IMR-90 (cell line): ENCODE measurements at regions of chr9 and their contacts with region 1.

Region 1: DNA sequence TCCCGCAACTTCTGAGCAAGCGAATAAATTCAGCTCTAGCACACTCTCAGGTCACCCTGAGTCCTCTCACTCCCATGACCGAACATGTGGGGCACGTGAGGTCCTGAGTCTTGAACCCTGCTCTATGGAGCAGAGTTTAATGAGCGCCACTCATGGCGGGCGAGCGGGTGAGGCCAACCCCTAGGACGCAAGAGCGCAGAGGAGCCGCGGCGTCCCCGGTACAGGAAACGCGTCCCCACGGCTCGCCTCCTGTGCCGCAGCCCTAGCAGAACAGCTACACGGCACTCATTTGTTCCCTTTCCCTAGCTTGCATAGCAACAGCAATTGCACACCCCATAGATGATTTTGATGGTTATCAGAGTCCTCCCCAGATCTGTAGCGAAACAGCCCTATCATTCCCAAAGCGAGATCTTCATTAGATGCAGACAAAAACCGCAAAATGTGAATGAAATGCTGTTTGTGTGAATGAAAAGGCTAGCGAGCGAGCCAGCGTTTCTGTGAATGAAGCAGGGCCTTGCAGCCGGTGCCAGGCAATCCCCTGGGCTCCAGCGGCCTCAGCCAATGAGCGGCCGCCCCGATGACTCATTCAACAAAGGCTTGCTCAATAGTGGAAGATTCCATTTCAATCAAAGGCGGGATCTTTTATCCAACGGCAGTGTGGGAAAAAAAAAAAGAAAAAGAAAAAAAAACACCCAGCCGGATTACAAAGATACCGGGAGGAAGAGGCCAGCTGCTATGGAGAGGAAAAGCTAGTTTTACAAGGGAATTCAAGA is 1.5 kb upstream of the SHC3 start:
- DNase-seq: peak; percentile 97
- ATAC-seq: peak; percentile 66
- H3K4me3 ChIP-seq: peak overlapping the region; percentile 50
- H3K27ac ChIP-seq: peak overlapping the region; percentile 91
- H3K4me1 ChIP-seq: peaks cover 11% of the 10 kb centered on the region
- H3K27me3 ChIP-seq: no peaks in the 10 kb centered on the region
- CTCF ChIP-seq: no peak
- POLR2A ChIP-seq: peak; percentile 76
- RAD21 ChIP-seq: peak; percentile 3; the same call in 1 of the 2 replicates

Region 2: DNA sequence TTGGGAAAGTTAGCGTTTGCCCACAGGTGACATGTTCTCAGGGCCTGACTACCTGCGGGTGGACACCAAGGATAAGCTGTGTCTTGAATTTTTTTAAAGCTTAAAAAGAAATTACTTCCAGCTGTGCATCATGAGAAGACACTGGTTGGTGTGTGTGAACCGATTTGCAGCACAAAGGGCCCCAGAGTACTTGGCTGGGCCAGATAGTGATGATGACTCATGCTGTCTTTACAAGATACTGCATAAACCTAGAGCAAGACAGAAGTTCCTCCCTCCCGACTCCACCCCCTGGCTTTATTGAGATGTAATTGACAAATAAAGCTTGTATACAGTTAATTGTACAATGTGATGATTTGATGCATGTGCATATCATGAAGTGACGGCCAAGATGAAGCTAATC is 432.3 kb before region 1 on chr9:
- CTCF ChIA-PET with region 1: no interaction called
- POLR2A ChIA-PET with region 1: no interaction called
- dilution Hi-C with region 1: no loop called
- in situ Hi-C with region 1: no loop called
- intact Hi-C with region 1: loop called (anchors 10 kb)
- DNase-seq: peak; percentile 96
- ATAC-seq: peak; percentile 50
- H3K4me3 ChIP-seq: no peak overlapping the region
- H3K27ac ChIP-seq: peak overlapping the region; percentile 93
- H3K4me1 ChIP-seq: peaks cover 35% of the 10 kb centered on the region
- H3K27me3 ChIP-seq: no peaks in the 10 kb centered on the region
- CTCF ChIP-seq: no peak
- POLR2A ChIP-seq: no peak
- RAD21 ChIP-seq: peak; percentile 10; the same call in 1 of the 2 replicates

Region 3: DNA sequence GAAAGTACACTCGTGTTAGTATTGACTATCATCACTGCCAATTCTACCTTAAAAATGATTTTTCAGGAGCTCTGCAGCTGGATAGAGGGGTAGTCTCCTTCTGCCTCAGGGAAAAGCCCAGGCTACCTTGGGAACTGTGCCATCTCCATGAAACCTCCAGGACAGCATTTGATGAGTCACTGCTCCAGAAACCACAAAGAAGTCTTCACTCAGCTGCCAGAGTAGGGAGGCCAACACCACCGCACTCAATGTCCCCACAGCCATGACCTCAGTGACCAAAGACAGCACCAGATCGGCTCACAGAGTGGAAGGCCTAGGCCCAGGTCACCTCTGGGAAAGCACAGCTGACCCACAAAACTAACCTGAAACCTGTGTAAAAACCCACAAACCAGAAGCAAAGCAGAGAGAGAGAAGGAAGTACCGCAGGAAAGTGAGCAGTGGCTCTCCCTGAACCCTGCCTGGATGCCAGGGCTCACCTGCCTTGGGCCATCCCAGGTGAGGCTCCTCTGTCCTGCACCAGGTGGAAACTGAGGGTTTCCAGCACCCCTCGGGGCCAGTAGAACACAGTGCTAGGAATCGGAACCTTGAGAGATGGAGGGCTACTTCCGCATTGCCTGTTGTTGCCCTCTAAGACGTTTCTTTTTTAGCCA is 158.8 kb before region 1 on chr9:
- CTCF ChIA-PET with region 1: no interaction called
- POLR2A ChIA-PET with region 1: no interaction called
- dilution Hi-C with region 1: no loop called
- in situ Hi-C with region 1: no loop called
- intact Hi-C with region 1: loop called (anchors 5 kb)
- DNase-seq: peak; percentile 94
- ATAC-seq: peak; percentile 75
- H3K4me3 ChIP-seq: no peak overlapping the region
- H3K27ac ChIP-seq: peak overlapping the region; percentile 5; the same call in 1 of the 2 replicates
- H3K4me1 ChIP-seq: peaks cover 28% of the 10 kb centered on the region
- H3K27me3 ChIP-seq: no peaks in the 10 kb centered on the region
- CTCF ChIP-seq: no peak
- POLR2A ChIP-seq: no peak
- RAD21 ChIP-seq: no peak

Region 4: DNA sequence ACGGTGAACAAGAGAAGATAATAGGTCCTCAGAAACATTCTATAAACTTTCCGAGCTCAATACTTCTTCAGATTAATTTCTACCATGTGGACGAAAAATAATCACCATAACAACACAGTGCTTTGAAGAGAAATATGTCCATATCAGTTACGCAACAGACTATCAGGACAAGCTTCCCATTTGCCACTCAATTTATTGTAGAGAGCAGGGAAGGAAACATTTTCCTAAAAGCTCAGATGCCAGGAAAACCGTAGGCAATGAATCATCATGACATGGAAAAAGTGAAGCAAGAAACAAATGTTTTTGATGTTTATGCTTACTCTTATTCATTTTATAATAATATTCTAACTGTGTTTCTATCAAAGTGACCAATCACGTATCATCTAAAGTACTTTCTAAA is 101.2 kb before region 1 on chr9:
- CTCF ChIA-PET with region 1: no interaction called
- POLR2A ChIA-PET with region 1: no interaction called
- dilution Hi-C with region 1: no loop called
- in situ Hi-C with region 1: no loop called
- intact Hi-C with region 1: loop called (anchors 1 kb)
- DNase-seq: peak; percentile 57
- ATAC-seq: peak; percentile 15
- H3K4me3 ChIP-seq: no peak overlapping the region
- H3K27ac ChIP-seq: no peak overlapping the region; the same call in 1 of the 2 replicates
- H3K4me1 ChIP-seq: peaks cover 12% of the 10 kb centered on the region
- H3K27me3 ChIP-seq: no peaks in the 10 kb centered on the region
- CTCF ChIP-seq: no peak
- POLR2A ChIP-seq: no peak
- RAD21 ChIP-seq: no peak

Region 5: DNA sequence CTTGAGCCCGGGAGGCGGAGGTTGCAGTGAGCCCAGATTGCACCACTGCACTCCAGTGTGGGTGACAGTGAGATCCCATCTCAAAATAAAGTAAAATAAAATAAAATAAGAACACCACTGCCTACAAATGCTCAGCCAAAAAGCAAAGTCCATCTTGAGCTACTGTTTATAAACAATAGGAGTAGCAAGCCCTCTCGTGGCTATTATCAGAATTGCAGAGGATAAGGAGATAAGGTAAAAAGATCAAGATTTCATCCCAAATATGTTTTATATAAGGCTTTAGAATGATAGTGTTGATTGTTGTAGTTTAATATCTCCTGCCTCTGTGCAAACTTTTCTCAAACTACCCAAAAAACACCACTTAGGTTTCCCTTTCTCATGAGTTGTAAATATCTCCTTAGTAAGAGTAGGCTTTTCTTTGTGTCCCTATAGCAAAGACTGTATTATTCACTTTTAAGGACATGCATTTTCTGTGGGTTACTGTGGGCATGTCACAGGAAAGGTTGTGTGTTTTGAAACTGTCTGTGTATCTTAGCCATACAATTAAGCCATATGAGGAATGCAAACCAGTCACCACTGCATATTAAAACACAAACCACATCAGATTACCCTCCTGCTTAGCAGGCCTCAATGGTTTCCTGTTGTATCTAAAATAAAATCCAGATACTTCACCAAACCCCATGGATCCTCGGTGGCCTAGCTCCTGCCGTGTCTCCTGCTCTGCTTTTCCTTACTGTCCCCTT is 99.1 kb after region 1 on chr9:
- CTCF ChIA-PET with region 1: interaction called, 3 read pairs
- POLR2A ChIA-PET with region 1: no interaction called
- dilution Hi-C with region 1: no loop called
- in situ Hi-C with region 1: no loop called
- intact Hi-C with region 1: loop called (anchors 2 kb)
- DNase-seq: peak; percentile 71
- ATAC-seq: peak; percentile 39; the same call in 1 of the 2 replicates
- H3K4me3 ChIP-seq: no peak overlapping the region
- H3K27ac ChIP-seq: no peak overlapping the region
- H3K4me1 ChIP-seq: peaks cover 7% of the 10 kb centered on the region; the same call in 1 of the 2 replicates
- H3K27me3 ChIP-seq: no peaks in the 10 kb centered on the region
- CTCF ChIP-seq: peak; percentile 75
- POLR2A ChIP-seq: no peak
- RAD21 ChIP-seq: peak; percentile 72

Region 6: DNA sequence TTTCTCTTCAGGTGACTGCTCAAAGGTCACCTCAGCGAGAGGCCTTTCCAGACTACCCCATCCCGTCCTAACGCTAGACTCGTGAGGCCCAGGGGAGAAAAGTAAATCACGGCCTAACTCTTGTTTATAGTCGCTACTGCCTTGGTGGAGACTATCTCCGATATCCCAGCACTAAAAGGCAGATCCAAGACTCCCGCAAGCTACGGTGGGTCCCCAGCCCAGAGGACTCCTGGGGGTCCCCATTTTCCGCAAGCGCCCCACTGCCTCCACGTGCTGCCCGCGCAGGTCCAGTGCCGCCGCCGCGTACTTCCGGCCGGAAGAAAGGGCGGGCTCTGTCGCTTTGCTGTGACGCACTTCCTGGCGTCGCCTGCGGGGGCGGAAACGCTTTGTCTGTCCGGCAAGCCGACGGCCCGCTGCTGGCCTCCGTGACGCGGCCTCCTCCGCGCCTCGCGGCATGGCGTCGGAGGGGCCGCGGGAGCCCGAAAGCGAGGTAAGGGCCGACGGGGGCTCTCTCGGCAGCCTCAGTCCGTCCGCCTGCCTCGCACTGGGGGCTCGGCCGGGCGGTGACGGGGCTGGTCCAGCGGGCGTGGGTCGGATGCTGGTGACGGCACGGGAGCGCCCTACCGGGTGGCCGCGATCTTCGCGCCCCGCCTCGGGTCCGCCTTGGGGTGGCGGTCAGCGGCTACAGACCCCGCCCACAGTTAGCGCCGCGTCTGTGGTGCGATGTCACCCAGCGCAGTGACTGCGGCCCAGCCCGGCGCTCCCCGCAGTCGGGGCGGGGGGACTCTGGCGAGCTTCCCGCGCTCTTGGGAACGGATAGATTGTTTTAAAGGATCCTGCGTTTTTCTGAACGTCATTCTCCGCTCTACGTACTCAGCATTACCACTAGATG is 138.3 kb after region 1 on chr9 and contains the start of gene SECISBP2:
- CTCF ChIA-PET with region 1: no interaction called
- POLR2A ChIA-PET with region 1: interaction called, 3 read pairs
- dilution Hi-C with region 1: no loop called
- in situ Hi-C with region 1: no loop called
- intact Hi-C with region 1: loop called (anchors 2 kb)
- DNase-seq: peak; percentile 97
- ATAC-seq: peak; percentile 97
- H3K4me3 ChIP-seq: peak within 1 kb of the TSS; percentile 79
- H3K27ac ChIP-seq: peak within 1 kb of the TSS; percentile 95
- H3K4me1 ChIP-seq: peaks cover 3% of the 10 kb centered on the region
- H3K27me3 ChIP-seq: no peaks in the 10 kb centered on the region
- CTCF ChIP-seq: peak; percentile 88
- POLR2A ChIP-seq: peak; percentile 98
- RAD21 ChIP-seq: peak; percentile 58
- total RNA-seq, gene SECISBP2: 18.8 and 19.7 TPM in 2 replicates